CD4-positive, alpha-beta T cell (primary cell): ENCODE measurements at regions of chr19 and their contacts with region 1.

Region 1: GRCh38 chr19:41548954-41549688 is 26.8 kb upstream of the CEACAM21 start:
- DNase-seq: peak in 13 of 14 experiments; percentile 57 to 91 (median 74)
- ATAC-seq: peak; percentile 63
- H3K4me3 ChIP-seq: peak overlapping the region; percentile 74
- H3K4me3 Mint-ChIP-seq: peak overlapping the region; percentile 97
- H3K27ac ChIP-seq: peak overlapping the region; percentile 62 to 67
- H3K27ac Mint-ChIP-seq: peak overlapping the region; percentile 82
- H3K4me1 ChIP-seq: peaks cover 53% of the 10 kb centered on the region
- H3K4me1 Mint-ChIP-seq: peaks cover 70% of the 10 kb centered on the region
- H3K27me3 ChIP-seq: no peaks in the 10 kb centered on the region
- H3K27me3 Mint-ChIP-seq: no peaks in the 10 kb centered on the region
- CTCF ChIP-seq: no peak

Region 2: GRCh38 chr19:41479757-41480191 is 69.3 kb before region 1 on chr19:
- CTCF ChIA-PET with region 1: no interaction called
- POLR2A ChIA-PET with region 1: no interaction called
- intact Hi-C with region 1: no loop called
- DNase-seq: no peak
- ATAC-seq: no peak
- H3K4me3 ChIP-seq: no peak overlapping the region
- H3K4me3 Mint-ChIP-seq: no peak overlapping the region
- H3K27ac ChIP-seq: no peak overlapping the region
- H3K27ac Mint-ChIP-seq: no peak overlapping the region
- H3K4me1 ChIP-seq: no peaks in the 10 kb centered on the region
- H3K4me1 Mint-ChIP-seq: no peaks in the 10 kb centered on the region
- H3K27me3 ChIP-seq: peaks cover 10 to 25% of the 10 kb centered on the region in 2 experiments
- H3K27me3 Mint-ChIP-seq: peaks cover 69% of the 10 kb centered on the region
- CTCF ChIP-seq: no peak

Region 3: DNA sequence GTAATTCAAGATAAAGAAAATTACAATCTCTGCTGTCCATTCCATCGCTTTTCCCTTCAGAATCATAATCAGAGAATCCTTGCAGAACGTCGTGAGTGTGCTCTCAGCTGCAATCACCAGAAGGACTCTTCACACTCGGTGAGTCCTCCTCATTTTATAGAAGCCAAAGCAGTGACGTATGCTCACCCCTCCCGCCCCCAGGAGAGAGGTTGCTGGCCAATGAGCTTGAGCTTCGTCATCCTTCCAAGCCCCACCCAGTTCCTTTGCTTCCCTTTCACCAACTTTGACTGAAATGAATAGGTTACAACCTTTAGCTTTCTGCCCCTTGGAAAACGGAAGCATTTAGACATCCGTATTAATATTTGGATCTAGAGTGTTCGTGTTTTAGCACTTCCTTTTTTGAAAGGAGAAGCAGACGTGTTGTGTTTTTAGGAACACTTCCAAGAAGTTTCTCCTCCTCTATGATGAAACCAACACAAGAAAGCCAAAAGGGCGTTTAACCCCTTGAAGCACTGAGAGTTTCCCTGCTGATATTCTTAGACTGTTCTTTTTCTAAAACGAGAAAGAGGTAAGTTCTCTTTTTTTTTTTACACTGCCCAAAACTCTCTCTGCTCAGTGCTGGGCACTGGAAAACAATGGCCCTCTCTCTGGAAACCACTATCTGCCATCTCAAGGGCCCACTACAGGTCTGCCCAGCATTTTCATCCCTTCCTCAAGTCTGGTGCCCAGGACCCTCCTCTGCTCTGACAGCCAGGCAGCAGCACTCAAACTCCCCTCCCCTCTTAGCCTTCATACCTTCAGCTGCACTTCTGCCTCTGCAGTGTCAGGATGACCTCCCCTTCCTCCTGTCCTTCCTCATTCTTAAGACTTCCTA is 17.4 kb before region 1 on chr19:
- CTCF ChIA-PET with region 1: interaction called, 4 read pairs
- POLR2A ChIA-PET with region 1: interaction called, 48 read pairs
- intact Hi-C with region 1: loop called in 1 of 2 experiments (anchors 2 kb)
- DNase-seq: peak; percentile 65 to 96 (median 80)
- ATAC-seq: peak; percentile 91
- H3K4me3 ChIP-seq: peak overlapping the region; percentile 42
- H3K4me3 Mint-ChIP-seq: peak overlapping the region; percentile 67
- H3K27ac ChIP-seq: peak overlapping the region; percentile 37 to 63
- H3K27ac Mint-ChIP-seq: peak overlapping the region; percentile 78
- H3K4me1 ChIP-seq: peaks cover 41% of the 10 kb centered on the region
- H3K4me1 Mint-ChIP-seq: peaks cover 51% of the 10 kb centered on the region
- H3K27me3 ChIP-seq: no peaks in the 10 kb centered on the region
- H3K27me3 Mint-ChIP-seq: no peaks in the 10 kb centered on the region
- CTCF ChIP-seq: no peak